CD4-positive, alpha-beta T cell (primary cell): ENCODE measurements at regions of chr11 and their contacts with region 1.

Region 1: GRCh38 chr11:75525596-75526541 is at the start of gene GDPD5:
- DNase-seq: peak; percentile 73 to 95 (median 84)
- ATAC-seq: peak; percentile 92
- H3K4me3 ChIP-seq: peak within 1 kb of the TSS; percentile 78
- H3K4me3 Mint-ChIP-seq: peak within 1 kb of the TSS; percentile 94
- H3K27ac ChIP-seq: no peak within 1 kb of the TSS
- H3K27ac Mint-ChIP-seq: peak within 1 kb of the TSS; percentile 80
- H3K4me1 ChIP-seq: peaks cover 45% of the 10 kb centered on the region
- H3K4me1 Mint-ChIP-seq: peaks cover 57% of the 10 kb centered on the region
- H3K27me3 ChIP-seq: no peaks in the 10 kb centered on the region
- H3K27me3 Mint-ChIP-seq: no peaks in the 10 kb centered on the region
- CTCF ChIP-seq: no peak
- total RNA-seq, gene GDPD5: 91.6 to 101 TPM

Region 2: GRCh38 chr11:75492181-75492820 is 33.6 kb before region 1 on chr11:
- CTCF ChIA-PET with region 1: interaction called, 6 read pairs
- POLR2A ChIA-PET with region 1: interaction called, 3 read pairs
- intact Hi-C with region 1: loop called in 1 of 2 experiments (anchors 1 kb)
- DNase-seq: peak; percentile 19 to 80 (median 59)
- ATAC-seq: peak; percentile 98
- H3K4me3 ChIP-seq: peak overlapping the region; percentile 0
- H3K4me3 Mint-ChIP-seq: no peak overlapping the region
- H3K27ac ChIP-seq: no peak overlapping the region
- H3K27ac Mint-ChIP-seq: peak overlapping the region; percentile 70
- H3K4me1 ChIP-seq: peaks cover 27% of the 10 kb centered on the region
- H3K4me1 Mint-ChIP-seq: peaks cover 22% of the 10 kb centered on the region
- H3K27me3 ChIP-seq: no peaks in the 10 kb centered on the region
- H3K27me3 Mint-ChIP-seq: no peaks in the 10 kb centered on the region
- CTCF ChIP-seq: no peak

Region 3: GRCh38 chr11:75508044-75508561 is 17.8 kb before region 1 on chr11:
- CTCF ChIA-PET with region 1: interaction called, 4 read pairs
- POLR2A ChIA-PET with region 1: interaction called, 13 read pairs
- intact Hi-C with region 1: loop called in 1 of 2 experiments (anchors 2 kb)
- DNase-seq: peak; percentile 35 to 88 (median 50)
- ATAC-seq: peak; percentile 95
- H3K4me3 ChIP-seq: no peak overlapping the region
- H3K4me3 Mint-ChIP-seq: peak overlapping the region; percentile 55
- H3K27ac ChIP-seq: peak overlapping the region; percentile 32 to 85
- H3K27ac Mint-ChIP-seq: peak overlapping the region; percentile 92
- H3K4me1 ChIP-seq: peaks cover 38% of the 10 kb centered on the region
- H3K4me1 Mint-ChIP-seq: peaks cover 31% of the 10 kb centered on the region
- H3K27me3 ChIP-seq: no peaks in the 10 kb centered on the region
- H3K27me3 Mint-ChIP-seq: no peaks in the 10 kb centered on the region
- CTCF ChIP-seq: no peak